Activated naive CD8-positive, alpha-beta T cell treated with anti-CD3 and anti-CD28 coated beads, Interleukin-2, amount 10 ng/mL, durations not matched to agents 7 days and 5 days (primary cell): ENCODE measurements at regions of chr14 and their contacts with region 1.

Region 1: DNA sequence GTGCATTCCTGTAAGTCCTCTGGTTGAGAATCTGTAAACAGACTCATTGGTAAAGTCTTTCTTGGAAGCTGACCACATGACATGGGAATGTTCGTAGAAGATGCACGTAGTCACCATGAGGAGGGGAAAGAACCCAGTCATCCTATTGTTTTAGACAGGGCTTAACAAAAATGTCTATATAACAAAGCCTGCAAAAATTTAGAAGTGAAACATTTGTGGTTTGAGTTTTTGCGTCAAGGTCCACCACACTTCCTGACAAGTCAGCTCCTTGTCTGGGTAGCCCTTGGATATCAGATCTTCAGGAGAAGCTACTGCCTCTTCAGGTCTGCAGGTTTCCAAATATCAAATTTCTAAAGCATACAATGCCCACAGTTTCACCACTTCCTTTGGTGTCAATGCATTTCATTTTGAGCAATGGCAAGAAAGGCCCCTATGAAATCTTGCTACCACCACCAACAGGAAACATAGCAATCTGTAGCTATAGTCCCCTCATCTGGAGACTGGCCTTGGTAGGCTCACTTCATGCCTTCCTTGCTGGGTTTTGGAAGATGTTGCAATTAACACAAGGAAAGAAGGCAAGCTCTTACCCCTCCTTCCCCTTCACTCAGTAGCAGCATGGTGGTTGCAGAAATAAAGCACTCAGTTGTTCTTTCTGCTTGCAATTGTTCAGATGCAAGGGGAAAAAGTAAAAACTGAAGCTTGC is 235.2 kb downstream of the PCNX1 start:
- DNase-seq: no peak
- ATAC-seq: peak; percentile 62
- H3K4me3 Mint-ChIP-seq: peak overlapping the region; percentile 69
- H3K27ac Mint-ChIP-seq: peak overlapping the region; percentile 94
- H3K4me1 Mint-ChIP-seq: peaks cover 36% of the 10 kb centered on the region
- H3K27me3 Mint-ChIP-seq: no peaks in the 10 kb centered on the region

Region 2: DNA sequence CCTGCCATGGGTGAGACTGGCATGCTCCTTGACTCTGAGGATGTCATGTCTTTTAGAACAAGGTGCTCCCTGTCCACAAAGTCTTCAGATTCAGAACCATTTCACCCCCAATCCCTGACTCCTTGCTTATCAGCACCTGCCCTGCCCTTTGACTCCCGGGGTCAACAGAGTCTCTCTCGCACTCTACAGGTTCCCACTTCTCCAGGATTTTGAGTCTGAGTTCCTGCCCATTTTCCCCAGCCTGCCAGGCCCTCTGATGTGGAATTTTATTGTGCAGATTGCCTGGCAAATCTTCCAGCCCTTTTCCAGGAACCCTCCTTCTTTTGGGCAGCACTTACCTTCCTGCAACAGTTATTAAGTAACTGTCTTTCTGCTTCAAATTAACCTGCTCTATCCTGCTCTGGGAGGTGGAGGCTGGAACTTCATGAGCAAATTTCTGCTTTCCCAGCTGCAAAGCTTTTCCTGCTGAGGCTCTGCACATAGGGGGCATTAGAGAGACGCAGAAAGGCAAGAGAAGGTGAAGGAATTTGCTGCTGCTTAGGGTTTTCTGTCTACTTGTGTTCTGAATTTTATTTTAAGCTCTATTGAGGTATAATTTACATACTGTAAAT is 23.8 kb after region 1 on chr14:
- POLR2A ChIA-PET with region 1: interaction called, 20 read pairs
- DNase-seq: no peak
- ATAC-seq: peak; percentile 27
- H3K4me3 Mint-ChIP-seq: no peak overlapping the region
- H3K27ac Mint-ChIP-seq: no peak overlapping the region
- H3K4me1 Mint-ChIP-seq: peaks cover 28% of the 10 kb centered on the region
- H3K27me3 Mint-ChIP-seq: peaks cover 12% of the 10 kb centered on the region